Naive thymus-derived CD8-positive, alpha-beta T cell (primary cell): ENCODE measurements at regions of chr1 and their contacts with region 1.

Region 1: GRCh38 chr1:156114101-156114916 is at the start of gene LMNA:
- DNase-seq: peak in 7 of 10 donors; percentile 33 to 73 (median 48)
- ATAC-seq: peak; percentile 72 to 76
- H3K4me3 Mint-ChIP-seq: peak within 1 kb of the TSS; percentile 76 to 93 (median 90)
- H3K27ac Mint-ChIP-seq: peak within 1 kb of the TSS; percentile 53 to 96 (median 88)
- H3K4me1 Mint-ChIP-seq: peaks cover 10 to 32% (median 25%) of the 10 kb centered on the region in 4 donors
- H3K27me3 Mint-ChIP-seq: peaks cover 4 to 39% (median 33%) of the 10 kb centered on the region in 5 donors
- polyA plus RNA-seq, gene LMNA: 0.62 to 4.0 (median 0.75) TPM

Region 2: GRCh38 chr1:156060937-156061636 is 53.2 kb before region 1 on chr1 and contains the start of gene RAB25:
- POLR2A ChIA-PET with region 1: no interaction called
- DNase-seq: no peak
- ATAC-seq: peak; percentile 23 to 39
- H3K4me3 Mint-ChIP-seq: peak within 1 kb of the TSS in 2 of 10 donors; percentile 16 to 39
- H3K27ac Mint-ChIP-seq: peak within 1 kb of the TSS in 3 of 10 donors; percentile 21 to 70 (median 42)
- H3K4me1 Mint-ChIP-seq: peaks cover 0 to 9% (median 4%) of the 10 kb centered on the region in 4 donors
- H3K27me3 Mint-ChIP-seq: no peaks in the 10 kb centered on the region
- polyA plus RNA-seq, gene RAB25: 0.81 to 2.0 (median 0.96) TPM

Region 3: DNA sequence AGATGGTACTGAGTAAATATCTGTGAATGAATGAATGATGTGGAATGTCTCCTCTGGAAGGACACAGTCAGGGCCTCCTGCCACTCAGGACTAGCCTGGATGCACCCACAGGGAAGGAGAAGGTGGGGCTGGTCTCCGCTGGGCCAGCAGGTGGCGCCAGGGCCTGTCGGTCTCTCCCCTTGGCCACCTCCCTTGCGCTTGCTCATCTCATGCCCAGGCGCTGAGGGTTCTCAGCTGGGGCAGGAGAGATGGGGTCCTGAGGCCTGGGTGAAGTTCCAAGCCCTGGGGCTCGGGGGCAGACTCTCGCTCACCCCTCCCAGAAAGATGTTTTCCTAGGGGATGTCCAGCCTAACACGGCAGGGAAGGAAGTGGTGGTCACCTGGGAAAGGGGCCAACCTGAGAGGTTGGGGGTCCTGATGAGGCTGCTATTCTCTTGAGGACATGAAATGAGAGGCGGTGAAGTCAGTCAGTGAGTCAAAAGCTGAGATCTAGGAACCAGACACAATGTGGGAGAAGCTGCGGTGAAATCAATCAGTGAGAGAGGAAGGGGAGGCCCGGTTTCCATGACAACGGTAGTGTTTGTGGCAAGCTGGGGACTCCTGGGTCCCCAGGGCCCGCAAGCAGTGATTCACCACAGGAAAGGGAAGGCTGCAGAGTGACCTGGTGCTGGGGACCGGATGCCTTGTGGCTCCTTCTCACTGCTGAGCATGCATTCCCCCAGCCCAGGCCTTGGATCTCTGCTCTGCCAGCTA is 17.5 kb before region 1 on chr1:
- POLR2A ChIA-PET with region 1: interaction called, 12 read pairs
- DNase-seq: peak; percentile 73 to 92 (median 84)
- ATAC-seq: peak; percentile 80 to 82
- H3K4me3 Mint-ChIP-seq: peak overlapping the region; percentile 5 to 85 (median 72)
- H3K27ac Mint-ChIP-seq: peak overlapping the region; percentile 75 to 99 (median 98)
- H3K4me1 Mint-ChIP-seq: peaks cover 19 to 47% (median 32%) of the 10 kb centered on the region in 4 donors
- H3K27me3 Mint-ChIP-seq: peaks cover 0 to 12% (median 5%) of the 10 kb centered on the region in 5 donors